ENCODE measurements at regions of chr17 and their contacts with region 1.

Region 1: DNA sequence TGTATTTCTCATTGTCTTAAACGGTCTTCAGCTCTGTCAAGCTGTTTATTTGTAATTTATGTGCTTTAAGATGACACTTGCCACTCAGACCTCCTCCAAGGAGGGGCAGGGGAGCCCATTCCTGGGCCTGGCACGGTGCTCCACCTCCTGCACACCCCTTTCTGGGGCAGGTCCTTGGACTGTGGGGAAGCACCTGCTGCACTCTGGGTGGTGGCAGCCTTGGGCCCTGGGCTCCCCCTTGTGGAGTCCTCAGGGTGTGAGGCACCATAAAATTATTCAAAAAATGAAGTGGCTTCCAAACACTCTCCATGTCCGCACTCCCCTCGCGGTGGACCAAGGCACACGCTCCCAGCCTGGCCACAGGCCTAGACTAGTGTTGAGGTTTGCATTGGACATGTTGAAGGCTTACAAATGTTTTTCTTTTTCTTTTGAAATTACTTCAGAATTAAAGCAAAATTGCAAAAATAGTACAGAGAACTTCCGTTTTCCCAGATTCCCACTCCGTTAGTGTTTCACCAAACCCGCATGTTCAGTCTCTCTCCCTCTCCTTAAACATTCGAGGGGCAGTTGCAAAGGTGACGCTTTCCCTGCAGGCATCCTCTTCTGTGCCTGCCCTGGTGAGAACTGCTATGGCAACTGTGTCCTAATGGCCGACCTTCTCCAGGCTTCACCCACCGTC is 32.4 kb downstream of the FOXK2 start:
- DNase-seq: peak; percentile 75
- H3K4me3 Mint-ChIP-seq: no peak overlapping the region
- H3K27ac Mint-ChIP-seq: no peak overlapping the region
- H3K4me1 Mint-ChIP-seq: peaks cover 35% of the 10 kb centered on the region
- H3K27me3 Mint-ChIP-seq: no peaks in the 10 kb centered on the region

Region 2: GRCh38 chr17:82450170-82451106 is 101.5 kb before region 1 on chr17 and contains the start of gene CYBC1:
- intact Hi-C with region 1: loop called (anchors 1 kb)
- DNase-seq: peak; percentile 93
- H3K4me3 Mint-ChIP-seq: peak within 1 kb of the TSS; percentile 91
- H3K27ac Mint-ChIP-seq: peak within 1 kb of the TSS; percentile 96
- H3K4me1 Mint-ChIP-seq: peaks cover 31% of the 10 kb centered on the region
- H3K27me3 Mint-ChIP-seq: no peaks in the 10 kb centered on the region
- total RNA-seq, gene CYBC1: 253 and 257 TPM in 2 replicates

Region 3: DNA sequence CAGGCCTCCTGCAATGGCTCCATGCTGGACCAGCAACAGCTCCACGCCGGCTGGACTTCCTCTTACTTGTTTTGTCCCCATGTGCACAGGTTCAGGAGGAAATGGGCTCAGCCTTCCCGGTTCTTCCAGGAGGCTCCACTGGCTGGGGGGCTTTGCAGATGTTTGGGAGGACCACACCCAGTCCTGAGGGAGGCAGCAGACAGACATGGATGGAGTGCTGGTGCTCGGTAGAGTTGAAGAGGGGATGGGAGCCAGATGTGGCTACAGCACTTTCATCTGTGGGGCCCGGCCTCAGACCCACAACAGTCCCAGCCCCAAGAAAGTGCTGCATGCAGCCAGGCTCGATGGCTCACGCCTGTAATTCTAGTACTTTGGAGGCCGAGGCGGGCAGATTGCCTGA is 71.6 kb before region 1 on chr17:
- intact Hi-C with region 1: loop called (anchors 2 kb)
- DNase-seq: no peak
- H3K4me3 Mint-ChIP-seq: no peak overlapping the region
- H3K27ac Mint-ChIP-seq: no peak overlapping the region
- H3K4me1 Mint-ChIP-seq: peaks cover 29% of the 10 kb centered on the region
- H3K27me3 Mint-ChIP-seq: no peaks in the 10 kb centered on the region

Region 4: DNA sequence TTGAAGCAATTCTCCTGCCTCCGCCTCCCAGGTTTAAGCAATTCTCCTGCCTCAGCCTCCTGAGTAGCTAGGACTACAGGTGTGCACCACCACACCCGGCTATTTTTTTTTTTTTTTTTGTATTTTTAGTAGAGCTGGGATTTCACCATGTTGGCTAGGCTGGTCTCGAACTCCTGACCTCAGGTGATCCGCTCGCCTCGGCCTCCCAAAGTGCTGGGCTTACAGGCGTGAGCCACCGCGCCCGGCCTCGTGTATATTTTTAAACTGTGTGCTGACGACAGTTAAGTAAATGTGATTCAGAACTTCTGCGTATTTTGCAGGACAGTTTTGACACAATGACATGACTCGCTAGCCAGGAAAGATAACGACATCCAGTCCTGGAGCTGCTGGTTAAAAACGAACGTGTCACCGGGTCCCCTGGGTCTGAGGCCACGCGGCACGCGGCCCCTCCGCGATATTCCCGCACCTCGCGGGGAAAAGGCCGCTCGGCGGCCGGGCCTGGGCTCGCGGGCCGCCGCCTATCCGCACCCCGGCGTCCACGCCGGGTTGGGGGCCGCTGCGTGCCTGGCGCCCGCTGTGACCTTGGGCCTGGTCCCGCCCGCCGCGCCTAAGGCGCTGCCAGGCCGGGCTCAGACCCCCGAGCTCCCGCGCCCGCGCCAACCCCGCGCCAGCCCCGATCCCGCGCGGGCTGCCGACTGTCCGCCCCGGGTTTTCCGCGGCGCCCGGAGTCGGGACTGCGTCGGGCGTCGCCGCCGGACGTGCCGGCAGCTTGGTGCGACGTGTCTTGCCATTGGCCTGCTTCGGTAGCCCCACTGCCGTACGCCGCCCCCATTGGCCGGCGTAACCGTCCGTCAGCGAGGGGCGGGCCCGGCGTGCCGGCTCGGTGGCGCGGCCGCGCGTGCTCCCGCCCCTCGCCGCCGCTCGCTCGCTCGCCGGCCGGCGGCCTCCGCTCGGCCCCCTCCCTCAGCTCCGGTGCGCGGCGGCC is 32.8 kb before region 1 on chr17 and contains the start of gene FOXK2:
- intact Hi-C with region 1: loop called (anchors 1 kb)
- DNase-seq: peak; percentile 96
- H3K4me3 Mint-ChIP-seq: peak within 1 kb of the TSS; percentile 90
- H3K27ac Mint-ChIP-seq: peak within 1 kb of the TSS; percentile 92
- H3K4me1 Mint-ChIP-seq: peaks cover 14% of the 10 kb centered on the region
- H3K27me3 Mint-ChIP-seq: no peaks in the 10 kb centered on the region
- total RNA-seq, gene FOXK2: 97.7 and 98.1 TPM in 2 replicates

Region 5: DNA sequence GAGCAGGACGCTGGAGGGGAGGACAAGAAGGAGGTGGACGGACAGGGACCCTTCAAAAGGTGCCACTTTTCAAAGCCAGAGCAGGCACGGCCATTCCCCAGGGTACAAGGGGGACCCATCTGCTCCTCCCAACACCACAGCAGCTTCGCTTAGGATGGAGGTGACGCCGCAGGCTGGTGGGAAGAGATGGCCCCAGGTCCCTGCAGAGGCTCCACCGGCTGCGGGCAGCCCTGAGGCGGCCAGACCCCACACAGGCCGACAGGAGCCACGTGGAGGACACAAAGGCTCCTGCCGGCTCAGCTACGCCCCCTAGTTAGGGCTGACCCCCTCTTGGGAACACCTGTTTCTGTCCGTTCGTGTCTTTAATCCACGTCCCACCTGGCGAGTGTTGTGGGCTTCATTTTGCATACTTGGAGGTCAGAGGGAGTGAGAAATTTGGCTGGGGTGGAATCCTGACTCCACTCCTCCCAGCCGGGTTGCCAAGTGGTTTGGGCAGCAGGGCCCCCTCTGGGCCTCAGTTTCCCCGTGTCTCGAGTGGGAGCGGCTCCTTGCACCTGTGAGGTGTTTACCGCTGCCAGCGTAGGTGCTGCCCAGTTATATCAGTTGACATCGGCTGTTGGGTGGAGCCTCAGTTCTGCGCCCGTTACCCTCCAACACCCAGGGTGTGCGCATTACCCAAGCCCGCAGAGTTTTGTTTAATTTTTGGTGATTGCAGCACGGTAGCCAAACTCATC is 158.7 kb after region 1 on chr17:
- intact Hi-C with region 1: no loop called
- DNase-seq: no peak
- H3K4me3 Mint-ChIP-seq: no peak overlapping the region
- H3K27ac Mint-ChIP-seq: no peak overlapping the region
- H3K4me1 Mint-ChIP-seq: peaks cover 1% of the 10 kb centered on the region
- H3K27me3 Mint-ChIP-seq: no peaks in the 10 kb centered on the region

Measured in activated T-helper 1 cell treated with anti-CD3 and anti-CD28 coated beads, Interleukin-12 subunit alpha, Interleukin-12 subunit beta, Interleukin-2, Interleukin-4 antibody, amounts not matched to agents 30 ng/mL and 10 ng/mL and 1 ng/mL, durations not matched to agents 14 hours and 24 hours and 36 hours (primary cell).